IMR-90 (cell line): ENCODE measurements at regions of chr2 and their contacts with region 1.

Region 1: DNA sequence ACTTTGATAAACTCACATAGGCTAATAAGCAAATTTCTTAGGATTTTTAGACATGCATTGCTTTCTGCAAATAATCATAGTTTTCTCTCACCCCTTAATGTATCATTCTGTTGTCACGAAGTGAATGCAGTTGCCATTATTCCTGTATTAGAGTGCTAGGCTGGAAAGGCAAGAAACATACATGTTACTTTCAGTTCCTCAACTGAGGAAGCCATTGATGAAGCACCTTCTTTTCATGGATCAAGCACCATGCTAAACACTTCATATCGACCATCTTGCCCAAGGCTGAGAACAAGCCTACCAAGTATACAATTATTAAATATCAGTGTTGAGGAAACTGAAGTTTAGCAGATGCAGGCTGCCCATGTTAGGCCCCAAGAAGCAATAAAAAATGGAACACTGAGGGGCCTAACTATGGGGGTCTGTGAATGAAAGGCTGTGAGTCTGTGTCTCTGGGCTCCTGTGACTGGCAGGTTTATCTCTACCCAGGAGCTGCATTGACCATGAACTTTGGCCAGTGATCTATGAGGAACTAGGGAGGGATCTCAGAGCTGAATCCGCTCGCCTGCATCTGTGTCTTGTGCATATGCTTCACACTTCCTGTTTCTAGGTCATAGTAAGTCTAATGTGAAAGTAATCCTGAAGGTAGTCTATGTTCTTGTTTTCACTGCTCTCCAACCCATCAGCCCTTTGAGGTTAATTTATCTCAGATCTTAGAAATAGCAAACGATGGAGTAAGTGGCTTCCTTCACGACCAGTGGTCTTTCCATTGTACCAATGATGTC is 16.0 kb upstream of the TSPYL6 start:
- DNase-seq: no peak
- ATAC-seq: no peak
- H3K4me3 ChIP-seq: no peak overlapping the region
- H3K27ac ChIP-seq: no peak overlapping the region
- H3K4me1 ChIP-seq: no peaks in the 10 kb centered on the region
- H3K27me3 ChIP-seq: no peaks in the 10 kb centered on the region
- CTCF ChIP-seq: no peak
- POLR2A ChIP-seq: no peak
- RAD21 ChIP-seq: no peak

Region 2: DNA sequence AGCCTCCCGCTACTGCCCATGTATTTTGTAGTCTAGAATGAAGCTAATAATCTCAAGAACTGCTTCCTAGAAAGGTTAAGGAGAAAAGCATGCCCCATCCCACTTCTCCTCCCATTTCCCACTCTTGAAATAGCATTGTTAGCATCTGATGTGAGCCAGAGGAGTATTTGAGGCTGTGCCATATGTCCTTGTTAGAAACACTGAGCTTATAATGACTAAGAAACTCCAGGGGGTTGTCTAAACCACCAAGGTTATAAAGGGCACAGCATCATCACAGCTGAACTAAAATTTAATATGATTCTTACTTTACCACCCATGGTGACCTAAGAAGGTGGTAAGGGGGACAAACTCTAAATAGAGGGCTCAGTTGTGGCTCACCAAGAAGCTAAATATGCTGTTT is 32.6 kb before region 1 on chr2:
- CTCF ChIA-PET with region 1: no interaction called
- POLR2A ChIA-PET with region 1: no interaction called
- dilution Hi-C with region 1: no loop called
- in situ Hi-C with region 1: no loop called
- intact Hi-C with region 1: loop called (anchors 5 kb)
- DNase-seq: peak; percentile 94
- ATAC-seq: peak; percentile 95
- H3K4me3 ChIP-seq: no peak overlapping the region
- H3K27ac ChIP-seq: no peak overlapping the region
- H3K4me1 ChIP-seq: peaks cover 7% of the 10 kb centered on the region; the same call in 1 of the 2 replicates
- H3K27me3 ChIP-seq: no peaks in the 10 kb centered on the region
- CTCF ChIP-seq: no peak
- POLR2A ChIP-seq: no peak
- RAD21 ChIP-seq: no peak